ENCODE measurements at regions of chr18 and their contacts with region 1.

Region 1: DNA sequence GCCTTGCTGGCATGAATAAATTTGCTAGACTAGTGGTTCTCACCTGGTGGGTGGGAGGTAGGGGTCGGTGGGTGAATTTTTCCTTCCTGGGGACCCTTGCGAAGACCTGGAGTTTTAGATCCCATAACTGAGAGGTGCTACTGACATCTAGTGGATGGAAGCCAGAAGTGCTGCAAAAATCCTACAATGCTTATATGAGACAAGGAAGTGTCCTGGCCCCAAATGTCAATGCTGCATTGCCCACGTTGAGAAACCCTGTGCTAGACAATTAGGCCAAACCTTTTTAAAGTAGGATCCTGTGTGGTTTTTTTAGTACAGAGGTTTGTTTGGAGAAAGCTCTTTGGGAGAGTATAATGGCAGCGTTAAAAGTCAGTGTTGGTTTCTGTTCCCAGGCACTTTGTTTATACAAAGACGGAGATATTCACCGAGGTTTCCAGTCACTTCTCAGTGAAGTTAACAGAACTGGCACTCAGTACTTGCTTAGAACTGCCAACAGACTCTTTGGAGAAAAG is 9.6 kb downstream of the SERPINB8 start:
- DNase-seq: peak; percentile 19
- H3K4me3 Mint-ChIP-seq: no peak overlapping the region
- H3K27ac Mint-ChIP-seq: peak overlapping the region; percentile 20
- H3K4me1 Mint-ChIP-seq: peaks cover 40% of the 10 kb centered on the region
- H3K27me3 Mint-ChIP-seq: no peaks in the 10 kb centered on the region

Region 2: GRCh38 chr18:63823518-63824219 is 155.8 kb before region 1 on chr18:
- intact Hi-C with region 1: loop called (anchors 1 kb)
- DNase-seq: peak; percentile 9
- H3K4me3 Mint-ChIP-seq: no peak overlapping the region
- H3K27ac Mint-ChIP-seq: no peak overlapping the region
- H3K4me1 Mint-ChIP-seq: no peaks in the 10 kb centered on the region
- H3K27me3 Mint-ChIP-seq: peaks cover 17% of the 10 kb centered on the region

Region 3: DNA sequence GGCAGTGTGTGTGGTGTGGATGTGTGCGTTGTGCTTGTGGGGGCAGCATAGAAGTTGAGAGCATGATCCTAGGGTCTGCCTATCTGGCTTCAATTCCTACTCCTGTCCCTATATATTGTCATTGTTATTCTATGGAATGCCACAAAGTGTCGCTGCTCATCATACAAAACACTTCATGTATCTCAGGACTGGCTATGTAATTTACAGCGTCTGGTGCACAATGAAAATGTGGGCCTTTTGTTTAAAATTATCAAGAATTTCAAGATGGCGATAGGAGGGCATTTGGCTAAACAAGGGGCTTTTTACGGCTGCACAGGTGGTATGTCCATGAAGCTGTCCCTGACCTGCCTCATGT is 88.5 kb before region 1 on chr18:
- intact Hi-C with region 1: loop called (anchors 1 kb)
- DNase-seq: no peak
- H3K4me3 Mint-ChIP-seq: no peak overlapping the region
- H3K27ac Mint-ChIP-seq: no peak overlapping the region
- H3K4me1 Mint-ChIP-seq: no peaks in the 10 kb centered on the region
- H3K27me3 Mint-ChIP-seq: no peaks in the 10 kb centered on the region

Region 4: DNA sequence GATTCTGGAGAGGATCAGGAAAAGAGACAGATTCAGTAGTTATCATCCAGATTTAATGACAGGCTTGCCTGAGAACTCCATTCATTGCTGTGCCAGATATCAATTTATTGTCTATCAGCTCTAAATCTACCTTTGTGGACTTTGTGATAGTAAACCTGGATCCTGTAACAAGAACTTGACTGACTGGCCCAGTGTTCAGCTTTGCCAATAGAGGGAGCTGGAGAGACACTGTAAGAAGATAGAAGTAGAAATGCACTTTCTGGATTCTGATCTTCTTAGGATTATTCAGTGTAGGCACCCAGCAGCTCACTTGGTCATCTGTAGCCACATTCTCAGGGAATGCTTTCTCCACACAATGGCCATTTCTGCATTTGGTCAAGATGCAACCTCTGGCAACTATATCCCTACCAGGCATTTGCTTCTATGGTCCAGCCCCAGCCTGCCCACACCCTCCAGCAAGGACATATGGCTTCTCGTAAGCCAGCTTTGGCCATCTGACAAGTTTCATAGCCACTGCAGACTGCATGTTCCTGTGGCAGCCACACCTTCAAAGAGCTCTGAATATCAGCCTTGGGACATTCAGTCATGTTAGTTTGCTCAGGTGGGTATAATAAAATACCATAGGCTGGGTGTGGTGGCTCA is 15.7 kb before region 1 on chr18:
- intact Hi-C with region 1: loop called (anchors 1 kb)
- DNase-seq: peak; percentile 13
- H3K4me3 Mint-ChIP-seq: no peak overlapping the region
- H3K27ac Mint-ChIP-seq: no peak overlapping the region
- H3K4me1 Mint-ChIP-seq: peaks cover 21% of the 10 kb centered on the region
- H3K27me3 Mint-ChIP-seq: no peaks in the 10 kb centered on the region